ENCODE measurements at regions of chr6 and their contacts with region 1.

Region 1: DNA sequence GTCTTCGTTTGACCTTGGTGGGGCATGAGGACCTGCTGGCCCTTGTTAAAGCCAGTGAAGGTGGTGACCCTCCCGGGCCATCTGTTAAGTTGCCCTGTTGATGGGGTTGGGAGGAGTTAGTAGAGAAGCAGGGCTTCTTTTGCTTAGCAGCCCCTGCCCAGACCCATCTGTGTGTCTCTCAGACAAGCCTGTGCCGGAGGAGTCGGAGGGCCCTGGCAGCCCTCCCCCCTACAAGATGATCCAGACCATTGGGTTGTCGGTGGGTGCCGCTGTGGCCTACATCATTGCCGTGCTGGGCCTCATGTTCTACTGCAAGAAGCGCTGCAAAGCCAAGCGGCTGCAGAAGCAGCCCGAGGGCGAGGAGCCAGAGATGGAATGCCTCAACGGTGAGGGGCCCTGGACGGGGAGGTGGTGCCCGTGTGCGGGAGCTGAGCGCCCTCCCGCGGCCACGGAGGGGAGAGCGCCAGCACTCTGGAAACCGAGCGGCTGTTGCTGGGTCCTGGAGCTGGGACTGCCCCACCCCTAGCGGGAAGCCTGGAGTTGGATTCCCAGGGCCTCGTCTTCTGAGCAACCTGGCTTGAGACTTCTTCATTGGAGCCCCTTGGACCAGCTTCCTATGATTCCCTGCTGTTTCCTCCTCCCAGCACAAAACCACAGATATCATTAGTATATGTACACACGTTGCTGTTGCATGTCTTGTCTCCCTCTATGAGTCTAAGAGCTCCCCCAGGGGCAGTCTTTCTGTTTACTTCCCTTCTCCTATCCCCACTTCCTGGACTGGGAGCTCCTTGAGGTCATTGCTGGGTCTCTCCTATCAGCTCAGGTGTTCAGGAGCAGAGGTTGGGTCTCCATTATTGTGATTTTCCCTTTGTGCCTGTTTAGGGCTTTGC is 27.6 kb upstream of the SRF start:
- DNase-seq: peak; percentile 78
- H3K4me3 Mint-ChIP-seq: no peak overlapping the region
- H3K27ac Mint-ChIP-seq: no peak overlapping the region
- H3K4me1 Mint-ChIP-seq: peaks cover 12% of the 10 kb centered on the region
- H3K27me3 Mint-ChIP-seq: no peaks in the 10 kb centered on the region

Region 2: GRCh38 chr6:43129434-43130194 is 13.9 kb before region 1 on chr6:
- CTCF ChIA-PET with region 1: interaction called, 16 read pairs
- POLR2A ChIA-PET with region 1: no interaction called
- DNase-seq: peak; percentile 29
- H3K4me3 Mint-ChIP-seq: no peak overlapping the region
- H3K27ac Mint-ChIP-seq: no peak overlapping the region
- H3K4me1 Mint-ChIP-seq: no peaks in the 10 kb centered on the region
- H3K27me3 Mint-ChIP-seq: no peaks in the 10 kb centered on the region

Region 3: GRCh38 chr6:43163899-43164298 is 20.4 kb after region 1 on chr6:
- CTCF ChIA-PET with region 1: interaction called, 15 read pairs
- POLR2A ChIA-PET with region 1: no interaction called
- DNase-seq: no peak
- H3K4me3 Mint-ChIP-seq: no peak overlapping the region
- H3K27ac Mint-ChIP-seq: no peak overlapping the region
- H3K4me1 Mint-ChIP-seq: no peaks in the 10 kb centered on the region
- H3K27me3 Mint-ChIP-seq: no peaks in the 10 kb centered on the region